Posterior vena cava (tissue), 2 donors: ENCODE measurements at regions of chr12 and their contacts with region 1.

Region 1: DNA sequence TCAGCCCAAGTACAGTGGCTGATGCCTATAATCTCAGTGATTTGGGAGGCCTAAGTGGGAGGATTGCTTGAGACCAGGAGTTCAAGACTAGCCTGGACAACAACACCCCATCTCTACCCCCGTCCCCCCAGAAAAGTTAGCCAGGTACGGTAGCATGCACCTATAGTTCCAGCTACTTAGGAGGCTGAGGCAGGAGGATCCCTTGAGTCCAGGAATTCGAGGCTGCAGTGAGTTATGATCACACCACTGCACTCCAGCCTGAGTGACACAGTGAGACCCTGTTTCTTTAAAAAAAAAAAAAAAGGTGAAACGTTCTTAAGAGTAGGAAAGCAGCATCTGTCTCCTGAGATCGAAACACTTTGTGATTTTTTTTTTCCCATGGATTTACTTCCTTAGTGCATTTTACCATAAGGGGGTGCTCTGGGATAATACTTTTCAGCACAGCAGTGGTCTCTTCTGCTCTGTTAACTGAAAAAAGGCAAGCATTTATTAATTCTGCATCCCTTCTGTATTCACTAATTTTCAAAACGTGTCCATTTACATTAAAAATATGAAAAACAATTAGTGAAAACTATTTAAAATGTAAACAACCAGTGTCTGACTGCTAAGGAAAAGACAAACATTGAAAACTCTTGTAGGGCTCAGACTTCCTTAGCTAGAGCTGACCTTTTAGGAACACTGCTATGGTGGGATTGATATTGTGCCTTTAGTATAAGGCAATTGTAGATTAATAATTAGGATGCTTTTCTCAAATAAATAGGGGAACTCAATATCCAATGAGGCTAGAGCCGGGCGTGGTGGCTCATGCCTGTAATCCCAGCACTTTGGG is 31.2 kb upstream of the USP44 start:
- DNase-seq: no peak

Region 2: GRCh38 chr12:95633049-95633545 is 50.7 kb after region 1 on chr12:
- intact Hi-C with region 1: no loop called
- DNase-seq: no peak

Region 3: GRCh38 chr12:95815635-95816212 is 233.3 kb after region 1 on chr12:
- intact Hi-C with region 1: loop called (anchors 5 to 10 kb)
- DNase-seq: no peak